ENCODE measurements at regions of chr7 and their contacts with region 1.

Region 1: GRCh38 chr7:130896898-130897514 is 163.0 kb upstream of the KLF14 start:
- DNase-seq: peak; percentile 83
- ATAC-seq: peak; percentile 53

Region 2: GRCh38 chr7:130606161-130606560 is 290.8 kb before region 1 on chr7:
- intact Hi-C with region 1: no loop called
- DNase-seq: no peak
- ATAC-seq: no peak

Region 3: DNA sequence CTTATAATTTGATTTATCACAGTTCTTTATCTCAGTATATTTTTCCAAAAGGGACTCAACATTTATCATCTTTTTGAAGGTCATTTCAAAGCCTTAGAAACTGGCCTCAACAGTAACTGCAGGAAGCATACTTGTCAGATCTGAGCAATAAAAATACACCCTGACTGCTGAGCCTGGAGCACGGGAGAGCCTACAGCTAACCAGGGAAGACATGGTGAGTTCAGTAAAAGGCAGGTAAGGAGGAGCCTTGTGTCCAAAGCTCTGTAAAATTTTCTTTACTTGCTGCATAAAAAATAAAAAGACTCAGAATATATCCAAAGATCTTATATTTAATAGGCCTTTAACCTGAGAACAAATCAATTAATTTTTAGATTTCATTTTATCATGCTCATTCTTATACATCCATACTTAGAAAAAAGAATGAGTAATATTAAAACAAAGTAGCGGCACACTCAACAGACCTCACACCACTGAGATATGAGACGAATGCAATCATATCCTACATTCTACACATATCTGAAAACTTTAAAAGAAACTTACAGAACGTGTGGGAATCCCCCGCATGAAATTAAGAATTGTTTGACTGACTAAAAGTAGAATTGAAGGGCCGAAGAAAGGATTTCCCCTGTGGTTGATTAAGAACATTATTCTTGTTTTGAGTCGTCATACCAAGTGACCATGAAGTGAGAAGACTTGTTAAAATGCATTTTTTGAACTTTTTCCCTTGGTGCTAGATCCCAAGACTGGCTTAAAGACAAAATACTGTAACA is 134.3 kb after region 1 on chr7:
- intact Hi-C with region 1: loop called (anchors 10 kb)
- DNase-seq: no peak
- ATAC-seq: no peak

Measured in left ventricle myocardium superior (tissue), 1 donor.